ENCODE measurements at regions of chr13 and their contacts with region 1.

Region 1: GRCh38 chr13:98653463-98653985 is 76.6 kb upstream of the STK24 start:
- DNase-seq: peak; percentile 33
- H3K4me3 ChIP-seq: no peak overlapping the region
- H3K27ac ChIP-seq: no peak overlapping the region
- H3K27me3 ChIP-seq: peaks cover 3% of the 10 kb centered on the region
- CTCF ChIP-seq: peak; percentile 96

Region 2: GRCh38 chr13:98454389-98454881 is 199.1 kb before region 1 on chr13:
- CTCF ChIA-PET with region 1: interaction called, 10 read pairs
- POLR2A ChIA-PET with region 1: no interaction called
- DNase-seq: peak; percentile 83
- H3K4me3 ChIP-seq: no peak overlapping the region; the same call in 1 of the 2 replicates
- H3K27ac ChIP-seq: peak overlapping the region; percentile 94
- H3K27me3 ChIP-seq: no peaks in the 10 kb centered on the region
- CTCF ChIP-seq: no peak

Region 3: GRCh38 chr13:98484289-98485219 is 169.0 kb before region 1 on chr13:
- CTCF ChIA-PET with region 1: interaction called, 10 read pairs
- POLR2A ChIA-PET with region 1: no interaction called
- DNase-seq: no peak
- H3K4me3 ChIP-seq: 0 out of 2 replicates have a peak overlapping the region, but pooled peaks have one; percentile 17
- H3K27ac ChIP-seq: peak overlapping the region; percentile 92
- H3K27me3 ChIP-seq: no peaks in the 10 kb centered on the region
- CTCF ChIP-seq: no peak

Region 4: DNA sequence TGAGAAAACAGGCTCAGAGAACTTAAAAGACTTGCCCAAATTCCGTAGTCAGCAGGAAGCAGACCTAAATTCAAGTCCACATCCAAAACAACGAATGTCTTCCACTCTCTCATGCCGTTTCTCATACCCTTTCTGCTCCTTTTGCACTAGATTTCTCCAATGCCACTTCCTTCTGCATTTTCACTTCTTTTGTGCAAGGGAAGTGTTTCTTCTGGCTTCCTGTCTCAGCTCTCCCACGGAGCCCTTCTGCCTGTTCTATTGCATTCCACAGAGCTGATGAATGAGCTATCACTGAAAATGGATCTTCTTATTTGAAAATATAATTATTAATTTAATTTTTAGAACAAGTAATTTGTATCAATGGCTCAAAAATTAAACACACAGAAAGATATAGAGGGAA is 20.6 kb before region 1 on chr13:
- CTCF ChIA-PET with region 1: interaction called, 17 read pairs
- POLR2A ChIA-PET with region 1: no interaction called
- DNase-seq: no peak
- H3K4me3 ChIP-seq: no peak overlapping the region
- H3K27ac ChIP-seq: no peak overlapping the region
- H3K27me3 ChIP-seq: peaks cover 5% of the 10 kb centered on the region
- CTCF ChIP-seq: no peak

Region 5: DNA sequence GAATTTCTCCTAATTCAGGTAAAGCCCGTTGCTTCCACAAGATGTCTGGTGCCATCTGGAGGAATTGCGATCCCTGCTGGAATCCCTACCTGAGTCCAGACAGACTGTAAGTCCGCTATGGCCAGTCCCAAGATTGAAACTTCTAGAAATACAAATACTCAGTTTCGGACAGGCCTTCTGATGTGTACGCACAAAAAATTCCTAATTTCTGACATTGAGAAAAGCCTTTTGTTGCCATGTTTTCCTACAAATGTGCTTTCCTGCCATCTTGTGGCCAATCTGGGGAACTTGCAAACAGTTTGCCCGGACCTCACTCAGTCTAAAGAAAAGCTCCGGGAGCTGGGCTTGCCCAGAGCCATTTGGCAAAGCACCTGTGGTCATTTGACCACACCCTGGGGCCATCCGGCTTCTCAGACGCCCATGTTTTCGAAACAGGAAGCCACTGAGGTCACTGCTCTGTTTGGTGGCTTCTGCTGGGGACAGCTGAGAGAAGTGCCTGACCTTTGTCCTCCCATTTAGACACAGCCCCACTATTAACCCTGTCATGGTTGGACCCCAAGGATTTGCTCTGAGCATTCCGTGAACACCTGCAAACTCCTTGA is 19.5 kb after region 1 on chr13:
- CTCF ChIA-PET with region 1: interaction called, 14 read pairs
- POLR2A ChIA-PET with region 1: no interaction called
- DNase-seq: peak; percentile 52
- H3K4me3 ChIP-seq: no peak overlapping the region
- H3K27ac ChIP-seq: no peak overlapping the region
- H3K27me3 ChIP-seq: peaks cover 1% of the 10 kb centered on the region
- CTCF ChIP-seq: peak; percentile 87